MCF 10A (cell line): ENCODE measurements at regions of chr6 and their contacts with region 1.

Region 1: DNA sequence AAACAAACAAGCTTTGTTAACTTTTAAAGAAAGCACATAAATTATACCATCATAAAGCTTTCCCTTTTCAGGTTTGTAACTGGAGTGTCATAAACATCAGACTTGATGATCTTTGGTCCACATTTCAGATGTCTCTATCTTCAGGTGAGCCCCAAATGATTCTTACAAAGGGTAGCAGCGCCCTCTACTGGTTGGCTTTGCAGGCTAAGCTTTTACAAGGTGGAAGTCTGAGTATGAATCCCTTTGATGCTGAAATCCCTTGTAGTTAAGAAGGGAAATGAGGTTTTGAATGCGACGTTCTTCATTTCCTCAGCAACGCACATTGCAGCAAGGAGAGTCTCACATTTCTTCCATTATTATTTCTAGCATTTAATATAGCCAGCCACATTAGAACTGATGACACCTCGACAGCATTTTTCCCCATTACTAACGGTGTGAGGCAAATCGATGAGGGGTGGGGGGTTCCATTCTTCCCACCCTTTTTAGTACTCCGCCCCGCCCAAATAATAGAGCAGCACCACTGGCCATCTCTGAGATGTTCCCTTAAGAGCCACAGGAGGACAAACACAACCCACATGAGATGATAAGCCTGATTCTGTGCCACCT is 126.3 kb upstream of the NT5E start:
- DNase-seq: peak; percentile 89
- H3K4me3 Mint-ChIP-seq: no peak overlapping the region
- H3K27ac Mint-ChIP-seq: no peak overlapping the region
- H3K4me1 Mint-ChIP-seq: no peaks in the 10 kb centered on the region
- H3K27me3 Mint-ChIP-seq: no peaks in the 10 kb centered on the region
- CTCF ChIP-seq: peak; percentile 85

Region 2: GRCh38 chr6:84227434-84228197 is 1095.9 kb before region 1 on chr6 and contains the start of gene CEP162:
- CTCF ChIA-PET with region 1: interaction called, 24 read pairs
- POLR2A ChIA-PET with region 1: no interaction called
- intact Hi-C with region 1: loop called (anchors 5 kb)
- DNase-seq: peak; percentile 87
- H3K4me3 Mint-ChIP-seq: peak within 1 kb of the TSS; percentile 94
- H3K27ac Mint-ChIP-seq: peak within 1 kb of the TSS; percentile 72
- H3K4me1 Mint-ChIP-seq: peaks cover 13% of the 10 kb centered on the region
- H3K27me3 Mint-ChIP-seq: peaks cover 18% of the 10 kb centered on the region
- CTCF ChIP-seq: peak; percentile 75
- total RNA-seq, gene CEP162: 2.4 and 2.9 TPM in 2 replicates

Region 3: DNA sequence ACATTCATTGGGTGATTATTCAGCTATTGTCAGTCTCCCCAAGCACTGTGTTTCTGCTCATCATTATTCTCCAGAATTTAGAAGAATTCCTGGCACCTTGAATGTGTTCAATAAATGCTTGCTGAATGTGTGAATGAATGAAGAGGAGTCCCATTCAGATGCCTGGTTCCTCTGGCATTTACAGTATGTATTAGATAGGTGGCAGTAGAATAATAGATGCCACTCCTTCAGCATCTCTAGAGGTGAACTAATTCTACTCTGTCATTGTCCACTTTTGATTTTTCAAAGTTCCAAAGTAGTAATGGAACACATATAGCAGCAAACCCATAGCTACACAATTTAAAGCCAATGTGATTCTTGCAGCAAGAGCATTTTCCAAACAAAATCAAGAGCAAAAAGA is 977.2 kb before region 1 on chr6:
- CTCF ChIA-PET with region 1: interaction called, 7 read pairs
- POLR2A ChIA-PET with region 1: no interaction called
- intact Hi-C with region 1: loop called (anchors 5 kb)
- DNase-seq: peak; percentile 13
- H3K4me3 Mint-ChIP-seq: no peak overlapping the region
- H3K27ac Mint-ChIP-seq: no peak overlapping the region
- H3K4me1 Mint-ChIP-seq: peaks cover 5% of the 10 kb centered on the region
- H3K27me3 Mint-ChIP-seq: no peaks in the 10 kb centered on the region
- CTCF ChIP-seq: peak; percentile 23

Region 4: DNA sequence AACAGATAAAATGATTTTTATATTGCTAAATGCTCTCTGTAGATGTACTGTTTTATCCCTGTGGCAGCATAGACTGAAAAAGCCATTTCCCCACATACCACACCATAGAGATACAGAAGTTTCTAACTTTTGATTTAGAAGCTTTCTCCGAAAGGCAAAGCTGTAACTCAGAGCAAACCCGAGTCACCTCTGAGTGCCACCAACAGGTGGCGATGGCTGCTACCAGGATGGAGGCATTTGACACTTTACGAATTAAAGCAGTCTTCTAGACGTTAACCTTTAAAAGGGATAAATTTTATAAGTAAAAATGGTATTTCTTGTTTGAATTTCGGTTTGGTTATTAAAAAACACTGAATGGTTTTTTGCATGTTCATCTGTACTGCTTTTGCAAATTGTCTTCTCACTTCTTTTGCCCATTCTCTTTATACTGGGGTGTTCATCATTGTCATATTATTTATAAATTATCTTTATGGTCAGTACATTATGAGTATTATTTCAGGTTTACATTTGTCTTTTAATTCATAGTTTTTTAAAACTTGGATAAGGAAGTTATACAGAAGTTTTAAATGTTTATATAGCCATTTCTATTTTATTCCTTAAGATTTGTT is 895.1 kb before region 1 on chr6:
- CTCF ChIA-PET with region 1: interaction called, 20 read pairs
- POLR2A ChIA-PET with region 1: no interaction called
- intact Hi-C with region 1: loop called (anchors 1 kb)
- DNase-seq: peak; percentile 66
- H3K4me3 Mint-ChIP-seq: no peak overlapping the region
- H3K27ac Mint-ChIP-seq: no peak overlapping the region
- H3K4me1 Mint-ChIP-seq: peaks cover 22% of the 10 kb centered on the region
- H3K27me3 Mint-ChIP-seq: no peaks in the 10 kb centered on the region
- CTCF ChIP-seq: peak; percentile 86

Region 5: GRCh38 chr6:84967389-84967788 is 356.1 kb before region 1 on chr6:
- CTCF ChIA-PET with region 1: interaction called, 10 read pairs
- POLR2A ChIA-PET with region 1: no interaction called
- intact Hi-C with region 1: loop called (anchors 1 kb)
- DNase-seq: peak; percentile 67
- H3K4me3 Mint-ChIP-seq: no peak overlapping the region
- H3K27ac Mint-ChIP-seq: peak overlapping the region; percentile 75
- H3K4me1 Mint-ChIP-seq: peaks cover 19% of the 10 kb centered on the region
- H3K27me3 Mint-ChIP-seq: no peaks in the 10 kb centered on the region
- CTCF ChIP-seq: peak; percentile 64

Region 6: DNA sequence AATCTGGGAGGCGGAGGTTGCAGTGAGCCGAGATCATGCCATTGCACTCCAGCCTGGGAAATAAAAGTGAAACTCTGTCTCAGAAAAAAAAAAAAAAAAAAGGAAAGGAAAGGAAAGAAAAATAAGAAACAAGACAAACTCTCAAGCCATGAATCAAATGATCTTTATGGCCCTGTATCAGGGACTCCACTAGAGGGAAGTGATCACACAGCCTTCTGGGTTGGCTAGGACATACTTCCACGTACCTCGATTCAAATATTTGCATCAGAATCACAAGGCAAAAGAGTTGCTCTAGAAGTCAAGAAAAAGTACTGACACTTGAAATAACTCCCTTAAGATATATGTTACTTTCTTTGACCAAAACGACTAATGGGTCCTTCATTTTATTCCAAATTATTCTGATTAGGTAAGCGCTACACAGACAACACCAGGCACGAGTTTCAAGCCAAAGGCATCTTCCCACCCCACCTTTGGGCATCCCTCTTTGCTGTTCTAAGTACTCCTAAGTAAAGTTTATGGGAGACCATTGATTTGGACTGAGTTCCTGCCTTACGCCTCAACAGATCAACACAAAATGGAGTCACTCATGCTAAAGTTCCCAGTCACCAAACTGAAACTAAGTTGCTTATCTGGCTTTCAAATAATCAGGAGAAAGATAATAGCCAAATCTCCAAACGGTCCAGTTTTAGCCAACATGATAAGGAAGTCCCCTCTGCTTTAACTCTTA is 48.8 kb after region 1 on chr6:
- CTCF ChIA-PET with region 1: no interaction called
- POLR2A ChIA-PET with region 1: no interaction called
- intact Hi-C with region 1: no loop called
- DNase-seq: no peak
- H3K4me3 Mint-ChIP-seq: no peak overlapping the region
- H3K27ac Mint-ChIP-seq: no peak overlapping the region
- H3K4me1 Mint-ChIP-seq: peaks cover 5% of the 10 kb centered on the region
- H3K27me3 Mint-ChIP-seq: no peaks in the 10 kb centered on the region
- CTCF ChIP-seq: no peak